Activated T-helper 1 cell treated with anti-CD3 and anti-CD28 coated beads, Interleukin-12 subunit alpha, Interleukin-12 subunit beta, Interleukin-2, Interleukin-4 antibody, amounts not matched to agents 30 ng/mL and 10 ng/mL and 1 ng/mL, durations not matched to agents 14 hours and 24 hours and 36 hours (primary cell): ENCODE measurements at regions of chr5 and their contacts with region 1.

Region 1: GRCh38 chr5:100852988-100853449 is 50.1 kb downstream of the ST8SIA4 start:
- DNase-seq: no peak
- H3K4me3 Mint-ChIP-seq: peak overlapping the region; percentile 81
- H3K27ac Mint-ChIP-seq: peak overlapping the region; percentile 96
- H3K4me1 Mint-ChIP-seq: peaks cover 39% of the 10 kb centered on the region
- H3K27me3 Mint-ChIP-seq: no peaks in the 10 kb centered on the region

Region 2: GRCh38 chr5:100479079-100479688 is 373.8 kb before region 1 on chr5:
- intact Hi-C with region 1: no loop called
- DNase-seq: no peak
- H3K4me3 Mint-ChIP-seq: no peak overlapping the region
- H3K27ac Mint-ChIP-seq: no peak overlapping the region
- H3K4me1 Mint-ChIP-seq: no peaks in the 10 kb centered on the region
- H3K27me3 Mint-ChIP-seq: peaks cover 3% of the 10 kb centered on the region

Region 3: GRCh38 chr5:100535060-100536005 is 317.7 kb before region 1 on chr5 and contains the start of gene FAM174A:
- intact Hi-C with region 1: loop called (anchors 1 kb)
- DNase-seq: peak; percentile 92
- H3K4me3 Mint-ChIP-seq: peak within 1 kb of the TSS; percentile 92
- H3K27ac Mint-ChIP-seq: peak within 1 kb of the TSS; percentile 99
- H3K4me1 Mint-ChIP-seq: peaks cover 25% of the 10 kb centered on the region
- H3K27me3 Mint-ChIP-seq: peaks cover 6% of the 10 kb centered on the region
- total RNA-seq, gene FAM174A: 8.2 and 9.7 TPM in 2 replicates

Region 4: GRCh38 chr5:100827481-100827889 is 25.5 kb before region 1 on chr5:
- intact Hi-C with region 1: loop called (anchors 1 kb)
- DNase-seq: no peak
- H3K4me3 Mint-ChIP-seq: no peak overlapping the region
- H3K27ac Mint-ChIP-seq: peak overlapping the region; percentile 31
- H3K4me1 Mint-ChIP-seq: peaks cover 36% of the 10 kb centered on the region
- H3K27me3 Mint-ChIP-seq: no peaks in the 10 kb centered on the region

Region 5: GRCh38 chr5:100840384-100840783 is 12.6 kb before region 1 on chr5:
- intact Hi-C with region 1: loop called (anchors 1 kb)
- DNase-seq: peak; percentile 22
- H3K4me3 Mint-ChIP-seq: no peak overlapping the region
- H3K27ac Mint-ChIP-seq: peak overlapping the region; percentile 95
- H3K4me1 Mint-ChIP-seq: peaks cover 71% of the 10 kb centered on the region
- H3K27me3 Mint-ChIP-seq: no peaks in the 10 kb centered on the region

Region 6: GRCh38 chr5:100872408-100873190 is 19.6 kb after region 1 on chr5:
- intact Hi-C with region 1: loop called (anchors 2 kb)
- DNase-seq: no peak
- H3K4me3 Mint-ChIP-seq: no peak overlapping the region
- H3K27ac Mint-ChIP-seq: peak overlapping the region; percentile 56
- H3K4me1 Mint-ChIP-seq: peaks cover 48% of the 10 kb centered on the region
- H3K27me3 Mint-ChIP-seq: no peaks in the 10 kb centered on the region

Region 7: DNA sequence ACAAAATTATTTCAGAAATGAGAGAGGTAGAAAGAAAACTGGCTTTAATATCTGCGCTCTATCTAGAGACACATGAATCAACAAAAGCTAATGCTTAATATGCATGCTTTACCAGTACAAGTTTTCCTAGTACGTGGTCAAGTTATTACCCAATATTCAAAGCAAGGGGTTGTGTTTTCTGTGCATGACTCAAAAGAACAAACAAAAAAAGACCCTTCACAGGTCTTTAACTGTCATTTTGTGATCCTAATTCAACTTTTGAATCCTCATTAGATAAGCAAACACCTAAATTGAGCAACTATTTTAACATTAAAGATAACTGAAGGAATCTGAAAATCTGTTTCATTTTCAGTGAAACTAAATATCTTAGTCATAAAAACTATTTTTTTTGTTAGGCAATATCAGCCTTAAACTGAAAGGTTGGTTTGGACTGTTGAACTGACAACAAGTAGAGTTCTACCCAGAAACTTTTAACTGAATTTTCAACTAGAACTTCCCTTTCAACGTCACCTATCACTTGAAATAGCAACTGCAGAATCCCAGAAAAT is 37.5 kb after region 1 on chr5:
- intact Hi-C with region 1: loop called (anchors 2 kb)
- DNase-seq: no peak
- H3K4me3 Mint-ChIP-seq: peak overlapping the region; percentile 81
- H3K27ac Mint-ChIP-seq: peak overlapping the region; percentile 94
- H3K4me1 Mint-ChIP-seq: peaks cover 85% of the 10 kb centered on the region
- H3K27me3 Mint-ChIP-seq: no peaks in the 10 kb centered on the region

Region 8: GRCh38 chr5:100913298-100913697 is 60.3 kb after region 1 on chr5:
- intact Hi-C with region 1: no loop called
- DNase-seq: no peak
- H3K4me3 Mint-ChIP-seq: no peak overlapping the region
- H3K27ac Mint-ChIP-seq: peak overlapping the region; percentile 21
- H3K4me1 Mint-ChIP-seq: peaks cover 23% of the 10 kb centered on the region
- H3K27me3 Mint-ChIP-seq: no peaks in the 10 kb centered on the region

Region 9: GRCh38 chr5:101505891-101506564 is 653.0 kb after region 1 on chr5:
- intact Hi-C with region 1: no loop called
- DNase-seq: no peak
- H3K4me3 Mint-ChIP-seq: no peak overlapping the region
- H3K27ac Mint-ChIP-seq: no peak overlapping the region
- H3K4me1 Mint-ChIP-seq: no peaks in the 10 kb centered on the region
- H3K27me3 Mint-ChIP-seq: no peaks in the 10 kb centered on the region